ENCODE measurements at regions of chr9 and their contacts with region 1.

Region 1: GRCh38 chr9:110814159-110814558 is 145.6 kb downstream of the MUSK start:
- DNase-seq: no peak
- ATAC-seq: peak in 1 of 2 donors; percentile 15

Region 2: DNA sequence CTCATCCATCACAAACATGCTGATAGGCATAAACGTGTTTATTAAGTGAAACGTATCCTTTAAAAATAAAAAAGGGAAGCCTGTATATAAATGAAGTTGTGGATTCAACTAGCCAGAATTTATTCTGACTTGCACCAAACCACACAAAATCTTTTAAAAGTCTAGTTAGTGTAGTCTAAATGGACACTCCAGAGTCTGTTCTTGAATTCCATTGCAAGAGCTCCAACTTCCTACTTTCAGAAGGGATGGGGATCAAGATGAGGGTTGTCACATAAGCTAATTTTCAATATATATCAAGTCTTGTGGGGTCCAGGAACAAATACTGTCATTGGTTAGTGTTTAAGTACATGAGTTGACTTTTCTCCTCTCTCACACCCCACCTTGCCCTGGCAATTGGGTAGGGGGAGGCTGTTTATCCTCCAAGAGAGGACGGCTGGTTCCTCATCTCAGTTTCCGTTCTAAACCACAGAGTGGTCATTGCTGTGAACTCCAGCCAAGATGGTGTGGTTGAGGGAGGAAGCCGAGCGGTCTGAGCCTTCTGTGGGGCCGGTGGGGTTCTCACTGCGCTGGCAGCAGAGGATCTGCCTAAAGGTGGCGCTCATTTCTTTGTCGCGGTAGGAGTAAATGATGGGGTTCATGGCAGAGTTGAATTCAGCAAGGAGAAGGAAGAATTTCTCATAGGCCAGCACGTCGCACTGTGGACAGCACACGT is 61.0 kb after region 1 on chr9:
- intact Hi-C with region 1: loop called in 1 of 2 experiments (anchors 10 kb)
- DNase-seq: peak; percentile 49
- ATAC-seq: peak; percentile 47 to 82

Region 3: GRCh38 chr9:110900917-110901316 is 86.8 kb after region 1 on chr9:
- intact Hi-C with region 1: no loop called
- DNase-seq: no peak
- ATAC-seq: no peak